ENCODE measurements at regions of chr17 and their contacts with region 1.

Region 1: GRCh38 chr17:41548844-41549595 is 20.9 kb upstream of the KRT19 start:
- DNase-seq: peak; percentile 92
- H3K4me3 ChIP-seq: peak overlapping the region; percentile 21 to 25; a peak in 2 of 4 replicates
- H3K27ac ChIP-seq: peak overlapping the region; percentile 85 to 86
- H3K4me1 ChIP-seq: peaks cover 17 to 30% of the 10 kb centered on the region in 2 experiments; a peak in 3 of 4 replicates
- H3K27me3 ChIP-seq: no peaks in the 10 kb centered on the region
- CTCF ChIP-seq: peak; percentile 94
- EP300 ChIP-seq: peak in 1 of 2 experiments; percentile 6; a peak in 2 of 4 replicates
- RAD21 ChIP-seq: peak; percentile 92

Region 2: GRCh38 chr17:40903129-40904065 is 645.6 kb before region 1 on chr17:
- CTCF ChIA-PET with region 1: interaction called, 140 read pairs
- POLR2A ChIA-PET with region 1: no interaction called
- DNase-seq: no peak
- H3K4me3 ChIP-seq: peak overlapping the region in 1 of 2 experiments; percentile 56; a peak in 2 of 4 replicates
- H3K27ac ChIP-seq: peak overlapping the region in 1 of 2 experiments; percentile 40; a peak in 1 of 4 replicates
- H3K4me1 ChIP-seq: peaks cover 0 to 14% of the 10 kb centered on the region in 2 experiments; a peak in 2 of 4 replicates
- H3K27me3 ChIP-seq: peaks cover 37% of the 10 kb centered on the region; the same call in 1 of the 2 replicates
- CTCF ChIP-seq: no peak
- EP300 ChIP-seq: no peak
- RAD21 ChIP-seq: no peak

Region 3: GRCh38 chr17:41103896-41104295 is 445.1 kb before region 1 on chr17:
- CTCF ChIA-PET with region 1: no interaction called
- POLR2A ChIA-PET with region 1: no interaction called
- DNase-seq: no peak
- H3K4me3 ChIP-seq: no peak overlapping the region
- H3K27ac ChIP-seq: no peak overlapping the region
- H3K4me1 ChIP-seq: peaks cover 0 to 3% of the 10 kb centered on the region in 2 experiments; a peak in 1 of 4 replicates
- H3K27me3 ChIP-seq: no peaks in the 10 kb centered on the region
- CTCF ChIP-seq: no peak
- EP300 ChIP-seq: no peak
- RAD21 ChIP-seq: no peak

Region 4: DNA sequence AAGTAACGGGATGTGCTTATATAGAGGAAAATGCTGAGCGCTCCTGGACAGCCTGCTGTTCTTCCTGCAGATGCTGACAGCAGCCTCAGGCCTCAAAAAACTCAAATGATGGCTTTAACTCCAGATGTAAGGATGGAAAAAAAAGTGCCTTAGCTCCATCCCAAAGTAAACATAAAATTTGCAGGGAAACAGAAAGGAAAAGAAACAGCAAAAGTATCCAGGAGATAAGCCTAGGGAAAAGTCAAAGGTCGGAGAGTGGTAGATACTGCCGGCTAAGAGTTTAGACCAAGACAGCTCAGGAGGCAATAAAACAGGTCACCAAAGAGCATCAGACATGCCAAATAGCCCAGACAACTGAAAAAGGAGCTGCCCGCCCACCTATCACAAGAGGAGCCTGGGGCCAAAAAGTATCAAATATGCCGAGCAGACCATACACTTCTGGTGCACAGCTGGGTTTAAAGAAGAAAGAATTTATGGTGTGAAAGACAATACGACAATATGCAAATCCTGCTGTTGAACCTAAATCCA is 158.5 kb before region 1 on chr17:
- CTCF ChIA-PET with region 1: interaction called, 14 read pairs
- POLR2A ChIA-PET with region 1: no interaction called
- DNase-seq: no peak
- H3K4me3 ChIP-seq: no peak overlapping the region
- H3K27ac ChIP-seq: no peak overlapping the region
- H3K4me1 ChIP-seq: peaks cover 0 to 4% of the 10 kb centered on the region in 2 experiments; a peak in 1 of 4 replicates
- H3K27me3 ChIP-seq: no peaks in the 10 kb centered on the region
- CTCF ChIP-seq: no peak
- EP300 ChIP-seq: no peak
- RAD21 ChIP-seq: no peak

Region 5: DNA sequence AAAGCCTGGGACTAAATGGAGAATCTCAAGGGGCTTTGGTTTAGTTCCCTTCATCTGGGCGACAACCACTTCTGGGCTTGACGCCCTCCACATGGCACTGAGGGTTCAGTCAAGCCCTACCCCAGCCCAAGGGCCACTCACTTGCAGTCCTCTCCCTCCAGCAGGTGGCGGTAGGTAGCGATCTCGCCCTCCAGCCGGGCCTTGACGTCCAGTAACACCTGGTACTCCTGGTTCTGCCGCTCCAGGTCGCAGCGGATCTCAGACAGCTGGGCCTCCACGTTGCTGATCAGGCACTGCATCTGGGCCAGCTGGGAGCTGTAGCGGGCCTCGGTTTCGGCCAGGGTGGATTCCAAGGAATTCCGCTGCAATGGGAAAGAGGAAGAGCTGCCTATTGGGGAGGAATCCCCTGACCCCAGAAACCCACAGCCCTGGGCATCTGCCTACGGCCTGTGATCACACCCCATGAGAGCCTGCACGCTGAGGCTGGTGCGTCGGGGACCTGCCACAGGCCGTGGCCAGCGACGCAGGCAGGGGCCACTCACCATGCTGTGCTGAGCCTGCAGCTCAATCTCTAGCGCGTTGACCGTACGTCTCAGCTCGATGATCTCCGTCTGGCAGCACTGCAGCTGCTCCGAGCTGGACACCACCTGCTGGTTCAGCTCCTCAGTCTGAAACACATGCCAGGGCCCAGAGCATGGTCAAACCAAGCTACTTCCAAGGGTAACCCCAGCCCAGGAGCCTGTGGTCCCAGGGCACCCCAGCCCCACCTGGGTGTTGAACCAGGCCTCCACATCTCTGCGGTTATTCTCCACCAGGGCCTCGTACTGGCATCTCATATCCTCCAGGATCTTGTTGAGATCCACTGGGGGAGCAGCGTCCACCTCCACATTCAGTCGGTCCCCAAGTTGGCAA is 62.0 kb before region 1 on chr17:
- CTCF ChIA-PET with region 1: interaction called, 67 read pairs
- POLR2A ChIA-PET with region 1: no interaction called
- DNase-seq: peak; percentile 40
- H3K4me3 ChIP-seq: no peak overlapping the region
- H3K27ac ChIP-seq: no peak overlapping the region
- H3K4me1 ChIP-seq: peaks cover 0 to 14% of the 10 kb centered on the region in 2 experiments; a peak in 1 of 4 replicates
- H3K27me3 ChIP-seq: no peaks in the 10 kb centered on the region
- CTCF ChIP-seq: peak; percentile 45
- EP300 ChIP-seq: no peak
- RAD21 ChIP-seq: peak; percentile 27; the same call in 1 of the 2 replicates

Region 6: GRCh38 chr17:41559548-41559947 is 10.5 kb after region 1 on chr17:
- CTCF ChIA-PET with region 1: interaction called, 66 read pairs
- POLR2A ChIA-PET with region 1: no interaction called
- DNase-seq: no peak
- H3K4me3 ChIP-seq: no peak overlapping the region
- H3K27ac ChIP-seq: no peak overlapping the region
- H3K4me1 ChIP-seq: no peaks in the 10 kb centered on the region; a peak in 1 of 4 replicates
- H3K27me3 ChIP-seq: peaks cover 30% of the 10 kb centered on the region; the same call in 1 of the 2 replicates
- CTCF ChIP-seq: no peak
- EP300 ChIP-seq: no peak
- RAD21 ChIP-seq: no peak

Region 7: DNA sequence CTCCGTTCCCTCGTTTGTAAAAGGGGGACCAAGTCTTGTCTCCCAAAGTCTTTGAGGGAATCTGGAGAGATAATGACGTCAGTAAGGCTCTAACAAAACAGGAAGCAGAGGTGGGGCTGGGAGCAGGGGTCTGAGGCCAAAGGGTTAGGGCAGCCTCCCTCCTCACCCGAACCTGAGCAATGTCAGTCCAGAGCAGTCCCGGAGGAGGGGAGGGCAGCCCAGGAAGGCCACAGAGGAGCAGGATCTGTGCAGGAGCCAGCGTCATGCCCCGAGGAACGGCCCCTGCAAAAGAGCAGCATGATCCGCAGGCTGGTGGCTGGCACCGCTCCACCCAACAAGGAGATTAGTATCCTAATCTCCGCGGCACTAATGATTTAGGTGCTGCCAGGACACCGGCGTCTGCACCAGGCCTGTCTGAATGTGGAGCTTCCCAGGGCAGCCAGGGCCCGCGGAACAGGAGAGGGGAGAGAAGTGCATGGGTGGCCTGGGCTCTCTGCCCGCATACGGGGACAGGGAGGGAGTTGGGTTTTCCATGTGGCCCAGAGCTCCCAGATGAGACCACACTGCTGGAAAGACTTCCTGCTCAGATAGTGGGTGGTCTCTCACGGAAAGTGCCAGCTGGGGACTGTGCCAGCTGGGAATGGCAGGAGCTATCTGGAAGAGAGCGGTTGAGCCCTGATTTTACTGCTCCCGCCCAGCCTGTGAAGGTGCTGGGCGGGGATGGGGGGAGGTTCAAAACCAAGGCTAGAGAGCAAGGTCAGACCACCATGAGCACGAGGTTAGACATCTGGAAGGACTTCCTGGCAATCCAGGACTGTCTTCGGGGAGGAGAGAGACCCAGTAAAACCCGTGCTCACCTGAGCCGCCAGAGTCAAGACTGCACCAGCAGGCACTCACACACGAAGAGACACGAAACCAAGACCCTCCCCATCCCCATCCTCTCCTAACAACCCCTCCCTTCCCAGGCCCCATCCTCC is 86.4 kb after region 1 on chr17:
- CTCF ChIA-PET with region 1: interaction called, 646 read pairs
- POLR2A ChIA-PET with region 1: no interaction called
- DNase-seq: peak; percentile 90
- H3K4me3 ChIP-seq: no peak overlapping the region
- H3K27ac ChIP-seq: peak overlapping the region in 1 of 2 experiments; percentile 84; a peak in 2 of 4 replicates
- H3K4me1 ChIP-seq: peaks cover 0 to 22% of the 10 kb centered on the region in 2 experiments; a peak in 2 of 4 replicates
- H3K27me3 ChIP-seq: no peaks in the 10 kb centered on the region
- CTCF ChIP-seq: no peak
- EP300 ChIP-seq: peak in 1 of 2 experiments; percentile 41; a peak in 1 of 4 replicates
- RAD21 ChIP-seq: no peak

Measured in SK-N-SH (cell line).